Activated B cell treated with CpG ODN at 0.5 μM for 24 hours (primary cell): ENCODE measurements at regions of chr3 and their contacts with region 1.

Region 1: GRCh38 chr3:194023501-194024280 is 112.3 kb upstream of the HES1 start:
- DNase-seq: no peak
- ATAC-seq: no peak
- H3K4me3 Mint-ChIP-seq: no peak overlapping the region
- H3K27ac Mint-ChIP-seq: no peak overlapping the region
- H3K4me1 Mint-ChIP-seq: peaks cover 6% of the 10 kb centered on the region
- H3K27me3 Mint-ChIP-seq: no peaks in the 10 kb centered on the region
- CTCF ChIP-seq: no peak

Region 2: DNA sequence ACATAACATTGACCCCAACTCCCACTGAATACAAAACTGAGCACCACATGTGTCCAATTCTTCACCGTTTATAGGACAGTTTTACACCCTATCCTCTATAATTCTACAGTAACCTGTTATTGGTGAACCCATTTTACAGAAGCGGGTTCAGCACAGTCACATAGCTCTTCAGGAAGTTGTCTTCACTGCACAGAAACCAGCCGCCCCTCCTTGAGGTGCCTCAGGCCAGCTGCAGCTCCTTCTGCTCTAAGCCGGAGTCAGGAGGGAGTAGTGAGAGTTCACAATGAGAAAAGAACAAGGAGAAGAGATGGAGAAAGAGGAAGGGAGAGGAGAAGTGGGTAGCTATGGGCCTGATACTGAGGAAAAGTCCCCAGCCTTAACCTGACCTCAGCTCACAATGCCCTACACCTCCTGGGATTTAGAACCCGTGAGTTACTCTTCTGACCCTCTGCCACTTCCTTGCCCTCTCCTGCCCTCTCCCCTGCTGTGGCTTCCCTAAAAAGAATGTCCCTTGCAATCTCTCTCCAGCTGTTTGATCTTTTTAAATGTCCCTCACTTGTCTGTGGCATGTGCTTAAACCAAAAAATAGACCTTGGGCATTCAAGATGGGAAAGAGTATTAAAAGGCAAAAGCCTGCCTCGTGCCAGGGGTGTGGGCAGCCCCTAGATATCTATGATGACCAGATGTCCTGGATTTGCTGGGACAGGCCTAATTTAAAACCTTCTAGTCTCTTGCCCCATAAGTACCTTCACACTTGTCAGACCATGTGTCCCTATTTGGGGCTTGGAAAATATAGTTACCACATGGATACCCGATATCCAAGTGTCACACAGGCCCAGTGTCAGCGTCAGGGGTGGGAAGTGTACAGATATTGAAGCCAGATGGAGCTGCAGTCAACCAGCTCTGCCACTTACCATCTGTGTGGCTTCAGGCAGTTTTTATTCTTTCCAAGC is 41.0 kb after region 1 on chr3:
- CTCF ChIA-PET with region 1: no interaction called
- POLR2A ChIA-PET with region 1: no interaction called
- intact Hi-C with region 1: loop called (anchors 2 kb)
- DNase-seq: no peak
- ATAC-seq: peak; percentile 18
- H3K4me3 Mint-ChIP-seq: no peak overlapping the region
- H3K27ac Mint-ChIP-seq: no peak overlapping the region
- H3K4me1 Mint-ChIP-seq: peaks cover 18% of the 10 kb centered on the region
- H3K27me3 Mint-ChIP-seq: no peaks in the 10 kb centered on the region
- CTCF ChIP-seq: no peak